ENCODE measurements at regions of chr17 and their contacts with region 1.

Region 1: DNA sequence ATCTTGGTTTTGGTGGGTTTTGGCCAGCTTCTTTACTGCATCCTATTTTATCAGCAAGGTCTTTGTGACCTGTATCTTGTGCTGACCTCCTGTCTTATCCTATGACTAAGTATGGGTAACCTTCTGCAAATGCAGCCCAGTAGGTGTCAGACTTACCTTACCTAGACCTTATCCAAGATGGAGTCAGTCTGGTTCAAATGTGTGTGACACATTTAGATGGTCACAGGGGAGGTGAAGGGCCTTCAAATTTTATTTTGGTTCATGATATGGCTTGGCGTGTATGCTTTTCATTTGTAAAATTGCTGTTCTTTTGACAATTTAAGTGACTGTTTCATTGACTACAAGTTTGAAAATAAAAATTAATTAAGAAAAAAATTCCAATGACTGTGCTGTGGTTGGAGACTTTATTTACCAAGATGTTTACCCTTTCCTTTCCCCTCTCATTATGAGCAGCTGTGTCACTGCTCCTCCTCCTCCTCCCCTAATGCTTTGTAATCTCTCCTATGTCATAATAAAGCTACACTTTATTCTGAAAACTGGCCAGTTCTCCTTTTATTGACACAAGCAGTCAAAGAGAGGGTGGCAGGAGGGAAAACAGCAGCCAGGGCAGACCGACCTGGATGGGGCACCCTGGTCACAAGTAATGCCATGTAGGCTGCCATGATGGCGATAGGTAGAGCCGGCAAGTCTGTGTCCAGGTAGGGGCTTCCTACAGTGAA is 49.4 kb downstream of the TNFRSF13B start:
- DNase-seq: peak in 3 of 14 experiments; percentile 26 to 37 (median 36)
- ATAC-seq: no peak
- H3K4me3 ChIP-seq: no peak overlapping the region
- H3K4me3 Mint-ChIP-seq: no peak overlapping the region
- H3K27ac ChIP-seq: no peak overlapping the region
- H3K27ac Mint-ChIP-seq: no peak overlapping the region
- H3K4me1 ChIP-seq: no peaks in the 10 kb centered on the region
- H3K4me1 Mint-ChIP-seq: no peaks in the 10 kb centered on the region
- H3K27me3 ChIP-seq: no peaks in the 10 kb centered on the region
- H3K27me3 Mint-ChIP-seq: no peaks in the 10 kb centered on the region
- CTCF ChIP-seq: no peak

Region 2: GRCh38 chr17:16662936-16663335 is 259.6 kb before region 1 on chr17:
- CTCF ChIA-PET with region 1: no interaction called
- POLR2A ChIA-PET with region 1: no interaction called
- intact Hi-C with region 1: no loop called
- DNase-seq: no peak
- ATAC-seq: no peak
- H3K4me3 ChIP-seq: no peak overlapping the region
- H3K4me3 Mint-ChIP-seq: no peak overlapping the region
- H3K27ac ChIP-seq: no peak overlapping the region
- H3K27ac Mint-ChIP-seq: no peak overlapping the region
- H3K4me1 ChIP-seq: peaks cover 9% of the 10 kb centered on the region
- H3K4me1 Mint-ChIP-seq: peaks cover 4% of the 10 kb centered on the region
- H3K27me3 ChIP-seq: peaks cover 6 to 9% of the 10 kb centered on the region in 2 experiments
- H3K27me3 Mint-ChIP-seq: peaks cover 55% of the 10 kb centered on the region
- CTCF ChIP-seq: no peak

Region 3: GRCh38 chr17:16987830-16988601 is 65.5 kb after region 1 on chr17:
- CTCF ChIA-PET with region 1: interaction called, 5 read pairs
- POLR2A ChIA-PET with region 1: no interaction called
- intact Hi-C with region 1: loop called (anchors 2 to 5 kb)
- DNase-seq: peak; percentile 24 to 76 (median 46)
- ATAC-seq: peak; percentile 54
- H3K4me3 ChIP-seq: peak overlapping the region; percentile 29
- H3K4me3 Mint-ChIP-seq: peak overlapping the region; percentile 63
- H3K27ac ChIP-seq: peak overlapping the region in 1 of 2 donors; percentile 3
- H3K27ac Mint-ChIP-seq: peak overlapping the region; percentile 82
- H3K4me1 ChIP-seq: peaks cover 47% of the 10 kb centered on the region
- H3K4me1 Mint-ChIP-seq: peaks cover 44% of the 10 kb centered on the region
- H3K27me3 ChIP-seq: no peaks in the 10 kb centered on the region
- H3K27me3 Mint-ChIP-seq: no peaks in the 10 kb centered on the region
- CTCF ChIP-seq: no peak

Region 4: GRCh38 chr17:17028059-17028877 is 105.7 kb after region 1 on chr17:
- CTCF ChIA-PET with region 1: no interaction called
- POLR2A ChIA-PET with region 1: no interaction called
- intact Hi-C with region 1: no loop called
- DNase-seq: no peak
- ATAC-seq: no peak
- H3K4me3 ChIP-seq: no peak overlapping the region
- H3K4me3 Mint-ChIP-seq: no peak overlapping the region
- H3K27ac ChIP-seq: no peak overlapping the region
- H3K27ac Mint-ChIP-seq: no peak overlapping the region
- H3K4me1 ChIP-seq: no peaks in the 10 kb centered on the region
- H3K4me1 Mint-ChIP-seq: no peaks in the 10 kb centered on the region
- H3K27me3 ChIP-seq: no peaks in the 10 kb centered on the region
- H3K27me3 Mint-ChIP-seq: no peaks in the 10 kb centered on the region
- CTCF ChIP-seq: no peak

Region 5: DNA sequence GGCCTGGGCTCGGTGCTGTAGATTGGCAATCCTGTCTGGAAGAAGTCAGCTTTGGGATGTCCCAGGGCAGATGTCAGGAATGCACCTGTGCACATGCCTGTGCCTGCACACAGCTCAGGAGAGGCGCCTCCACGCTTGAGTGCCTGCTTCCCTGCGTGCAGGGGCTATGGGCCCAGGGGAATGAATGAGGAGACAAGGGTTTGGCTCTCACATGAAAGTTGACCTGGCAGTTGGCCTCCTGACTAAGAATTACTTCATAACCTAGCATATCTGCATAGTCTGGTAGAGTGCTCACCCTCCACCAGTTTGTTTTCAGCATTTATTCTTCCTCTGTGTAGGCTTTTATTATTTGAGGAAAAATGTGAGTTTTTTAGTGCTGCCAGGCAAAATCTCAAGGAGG is 233.6 kb after region 1 on chr17:
- CTCF ChIA-PET with region 1: no interaction called
- POLR2A ChIA-PET with region 1: no interaction called
- intact Hi-C with region 1: no loop called
- DNase-seq: no peak
- ATAC-seq: no peak
- H3K4me3 ChIP-seq: no peak overlapping the region
- H3K4me3 Mint-ChIP-seq: no peak overlapping the region
- H3K27ac ChIP-seq: no peak overlapping the region
- H3K27ac Mint-ChIP-seq: peak overlapping the region; percentile 81
- H3K4me1 ChIP-seq: peaks cover 53% of the 10 kb centered on the region
- H3K4me1 Mint-ChIP-seq: peaks cover 48% of the 10 kb centered on the region
- H3K27me3 ChIP-seq: no peaks in the 10 kb centered on the region
- H3K27me3 Mint-ChIP-seq: no peaks in the 10 kb centered on the region
- CTCF ChIP-seq: no peak

Measured in CD4-positive, alpha-beta T cell (primary cell).